Activated CD4-positive, alpha-beta T cell treated with anti-CD3 and anti-CD28 coated beads, Interleukin-2, amount 10 ng/mL, durations not matched to agents 7 days and 5 days (primary cell): ENCODE measurements at regions of chr17 and their contacts with region 1.

Region 1: GRCh38 chr17:81871387-81872230 is 472 bp upstream of the ARHGDIA start:
- DNase-seq: peak; percentile 95
- H3K4me3 Mint-ChIP-seq: peak overlapping the region; percentile 86
- H3K27ac Mint-ChIP-seq: peak overlapping the region; percentile 97
- H3K4me1 Mint-ChIP-seq: peaks cover 43% of the 10 kb centered on the region
- H3K27me3 Mint-ChIP-seq: no peaks in the 10 kb centered on the region

Region 2: DNA sequence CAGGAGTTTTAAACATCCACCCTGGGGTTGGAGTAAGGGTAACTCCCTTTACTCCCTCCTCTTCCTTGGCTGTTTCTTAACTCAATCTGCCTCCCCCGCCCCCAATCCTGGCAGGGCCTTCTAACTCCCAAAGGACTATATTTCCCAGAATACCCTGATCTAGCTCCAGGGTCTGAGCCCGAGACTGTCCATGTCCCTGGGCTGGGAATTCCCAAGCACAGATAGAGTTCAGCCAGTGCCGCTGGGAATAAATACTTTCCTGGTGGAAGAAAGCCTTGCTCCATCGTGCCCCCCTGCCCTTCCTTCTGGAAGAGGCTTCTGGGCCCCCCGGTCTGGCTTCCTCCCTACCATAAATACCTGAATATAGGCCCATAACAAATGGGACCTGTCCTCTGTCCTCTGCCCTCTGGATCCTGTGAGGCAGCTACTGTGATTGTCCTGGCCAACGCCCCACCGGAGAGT is 466.2 kb before region 1 on chr17:
- CTCF ChIA-PET with region 1: no interaction called
- POLR2A ChIA-PET with region 1: no interaction called
- DNase-seq: no peak
- H3K4me3 Mint-ChIP-seq: no peak overlapping the region
- H3K27ac Mint-ChIP-seq: no peak overlapping the region
- H3K4me1 Mint-ChIP-seq: no peaks in the 10 kb centered on the region
- H3K27me3 Mint-ChIP-seq: peaks cover 57% of the 10 kb centered on the region

Region 3: DNA sequence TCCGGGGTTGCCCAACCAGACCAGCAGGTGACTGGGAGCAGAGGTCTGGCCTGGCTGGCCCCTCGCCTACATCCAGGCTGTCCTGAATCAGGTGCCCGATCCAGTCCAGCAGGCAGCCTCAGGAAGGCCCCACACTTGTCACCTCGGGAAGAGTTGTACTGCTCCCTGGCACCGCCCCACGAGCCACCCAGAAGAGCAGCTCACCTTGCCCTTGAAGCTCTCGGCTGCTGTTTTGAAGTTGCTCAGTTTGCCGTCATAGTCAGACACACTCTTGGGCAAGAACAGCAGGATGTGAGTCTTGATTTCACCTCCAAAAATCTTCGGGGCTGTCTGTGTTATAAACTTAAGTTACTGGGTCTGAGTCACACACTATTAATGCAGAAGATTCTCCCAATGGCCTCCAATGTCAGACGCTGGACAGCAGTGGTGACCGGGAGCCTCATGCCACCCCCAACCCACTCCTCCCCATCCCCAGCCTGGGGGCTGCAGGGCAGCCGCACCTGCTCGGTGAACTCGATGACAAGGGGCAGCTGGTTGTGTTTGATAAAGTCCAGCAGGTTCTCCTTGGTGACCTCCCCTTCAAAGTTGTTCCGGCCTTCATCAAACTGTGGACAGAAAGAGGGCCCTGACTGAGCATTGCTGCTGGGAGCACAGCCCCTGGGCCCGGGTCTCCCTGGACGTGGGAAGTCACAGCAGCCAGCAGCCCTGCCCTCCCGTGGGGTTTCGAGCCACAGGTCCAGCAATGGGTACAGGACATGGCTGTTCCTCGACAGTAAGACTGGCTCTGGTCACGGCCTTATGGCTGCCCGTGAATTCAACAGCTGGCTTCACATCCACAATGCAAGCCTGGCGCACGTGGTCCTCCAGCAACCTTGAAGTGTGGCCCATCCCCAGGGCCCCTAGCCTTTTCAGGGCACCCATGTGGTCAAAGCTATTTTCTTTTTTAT is 24.6 kb before region 1 on chr17:
- CTCF ChIA-PET with region 1: no interaction called
- POLR2A ChIA-PET with region 1: no interaction called
- DNase-seq: no peak
- H3K4me3 Mint-ChIP-seq: no peak overlapping the region
- H3K27ac Mint-ChIP-seq: no peak overlapping the region
- H3K4me1 Mint-ChIP-seq: no peaks in the 10 kb centered on the region
- H3K27me3 Mint-ChIP-seq: no peaks in the 10 kb centered on the region

Region 4: DNA sequence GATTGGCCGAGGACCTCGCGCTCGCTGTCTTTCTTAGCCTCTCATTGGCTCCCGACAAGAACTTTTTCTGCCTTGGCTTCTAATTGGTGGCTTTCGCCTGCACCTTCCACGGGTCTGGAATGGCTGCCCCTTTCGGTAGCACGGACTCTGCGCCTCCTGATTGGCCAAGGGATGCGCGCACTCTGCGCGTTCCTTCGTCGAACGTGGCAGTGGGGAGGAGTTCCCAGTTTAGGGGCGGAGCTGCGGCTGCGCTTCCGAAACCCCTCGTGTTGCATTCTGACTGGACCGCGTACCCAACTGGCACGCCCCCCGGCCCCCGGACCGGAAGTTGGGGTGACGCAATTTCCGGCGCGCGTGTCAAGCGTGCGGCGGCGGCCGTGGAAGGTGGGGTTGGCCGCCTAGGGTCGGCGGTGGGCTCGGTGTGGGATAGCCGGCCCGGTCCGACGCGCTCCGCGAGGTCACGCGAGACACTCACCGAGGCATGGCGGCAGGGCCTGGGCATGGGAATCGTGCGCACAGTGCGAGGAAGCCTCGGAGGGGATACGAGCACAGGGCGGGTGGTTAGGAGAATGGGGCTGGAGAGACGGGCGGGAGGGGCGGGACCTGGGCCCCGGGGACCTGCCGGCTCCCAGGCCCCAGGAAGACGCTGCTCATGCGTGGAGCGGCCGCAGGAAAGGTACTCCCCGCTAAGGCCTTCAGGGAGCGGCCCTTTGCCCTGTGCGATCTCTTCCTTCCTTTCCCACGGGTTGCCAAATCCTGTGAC is 10.7 kb before region 1 on chr17:
- CTCF ChIA-PET with region 1: interaction called, 11 read pairs
- POLR2A ChIA-PET with region 1: no interaction called
- DNase-seq: peak; percentile 99
- H3K4me3 Mint-ChIP-seq: peak overlapping the region; percentile 93
- H3K27ac Mint-ChIP-seq: peak overlapping the region; percentile 97
- H3K4me1 Mint-ChIP-seq: peaks cover 44% of the 10 kb centered on the region
- H3K27me3 Mint-ChIP-seq: no peaks in the 10 kb centered on the region

Region 5: DNA sequence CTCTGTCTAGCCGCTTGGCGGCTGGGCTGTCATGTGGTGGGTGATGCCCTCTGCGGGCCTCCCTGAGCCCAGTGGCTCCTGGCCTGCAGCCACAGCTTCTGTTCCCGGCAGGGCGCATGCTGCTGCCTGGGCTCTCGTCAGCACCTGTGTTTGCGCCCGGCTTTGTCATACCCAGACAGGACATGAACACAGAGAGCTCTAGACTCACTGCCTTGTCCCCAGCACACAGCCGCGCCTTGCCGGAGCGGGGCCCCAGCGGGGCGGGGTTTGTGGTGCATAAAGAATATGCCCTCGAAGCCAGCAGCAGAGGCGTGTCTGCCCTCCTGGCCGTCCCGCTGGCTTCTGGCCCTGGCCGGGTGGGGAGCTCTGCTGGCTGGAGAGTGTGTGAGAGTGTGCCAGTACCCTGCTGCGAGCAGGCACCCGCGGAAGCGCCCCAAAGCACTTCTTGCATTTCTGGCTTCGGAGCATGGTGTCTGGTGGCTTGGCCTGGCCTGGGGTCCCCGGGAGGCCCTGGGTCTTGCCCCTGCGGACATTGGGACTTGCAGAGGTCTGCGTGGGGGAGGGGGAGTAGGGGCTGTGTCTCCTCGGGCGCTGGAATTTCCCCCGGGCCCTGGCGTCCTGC is 120.2 kb after region 1 on chr17:
- CTCF ChIA-PET with region 1: no interaction called
- POLR2A ChIA-PET with region 1: no interaction called
- DNase-seq: no peak
- H3K4me3 Mint-ChIP-seq: no peak overlapping the region
- H3K27ac Mint-ChIP-seq: no peak overlapping the region
- H3K4me1 Mint-ChIP-seq: peaks cover 4% of the 10 kb centered on the region
- H3K27me3 Mint-ChIP-seq: no peaks in the 10 kb centered on the region